Caco-2 (cell line): ENCODE measurements at regions of chr11 and their contacts with region 1.

Region 1: DNA sequence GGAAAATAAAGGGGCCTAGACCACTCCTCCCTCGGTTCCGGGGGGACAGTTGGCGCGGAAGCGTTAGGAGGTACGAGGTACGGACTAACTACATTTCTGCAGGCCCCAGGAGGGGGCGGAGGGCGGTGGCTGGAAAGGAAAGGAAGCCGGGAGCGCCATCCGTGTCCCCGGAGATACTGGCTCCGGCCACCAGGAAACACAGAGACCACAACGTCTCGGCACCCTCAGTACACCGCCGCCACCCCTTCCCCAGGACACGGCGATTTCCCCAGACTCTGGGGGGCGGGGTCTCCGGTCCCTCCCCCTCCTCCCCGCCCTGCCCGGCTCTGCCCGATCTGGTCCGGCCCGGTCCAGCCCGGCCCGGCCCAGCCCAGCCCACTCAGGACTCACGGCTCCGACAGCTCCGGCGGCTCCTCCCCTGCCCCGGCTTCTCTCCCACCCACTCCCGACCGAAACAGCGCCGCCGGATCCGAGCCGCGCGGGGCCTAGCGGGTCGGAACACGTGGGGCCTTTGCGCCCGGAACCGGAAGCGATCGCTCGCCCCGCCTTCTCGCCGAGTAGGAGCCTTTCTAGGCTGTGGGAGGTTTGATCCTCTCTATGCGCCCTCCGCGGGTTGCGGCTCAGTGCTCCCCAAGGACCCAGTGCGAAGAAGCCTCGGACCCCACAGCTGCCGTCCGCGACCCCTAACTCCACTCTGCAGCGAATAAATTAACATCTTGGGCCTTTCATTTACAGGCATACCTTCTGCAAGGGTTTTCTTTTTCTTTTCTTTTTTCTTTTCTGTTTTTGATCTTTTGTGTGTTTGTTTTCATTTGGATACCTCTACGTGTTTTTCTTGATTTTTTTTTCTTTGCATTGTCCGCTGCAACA is at the start of gene ZNF202:
- DNase-seq: peak; percentile 95 to 96
- H3K4me3 ChIP-seq: peak within 1 kb of the TSS; percentile 85
- H3K4me3 Mint-ChIP-seq: peak within 1 kb of the TSS; percentile 85
- H3K27ac Mint-ChIP-seq: peak within 1 kb of the TSS; percentile 79
- H3K4me1 ChIP-seq: peaks cover 18% of the 10 kb centered on the region
- H3K4me1 Mint-ChIP-seq: peaks cover 6% of the 10 kb centered on the region
- H3K27me3 ChIP-seq: no peaks in the 10 kb centered on the region
- H3K27me3 Mint-ChIP-seq: peaks cover 10% of the 10 kb centered on the region
- CTCF ChIP-seq: peak; percentile 41 to 46
- total RNA-seq, gene ZNF202: 25.5 and 27.9 TPM in 2 replicates

Region 2: DNA sequence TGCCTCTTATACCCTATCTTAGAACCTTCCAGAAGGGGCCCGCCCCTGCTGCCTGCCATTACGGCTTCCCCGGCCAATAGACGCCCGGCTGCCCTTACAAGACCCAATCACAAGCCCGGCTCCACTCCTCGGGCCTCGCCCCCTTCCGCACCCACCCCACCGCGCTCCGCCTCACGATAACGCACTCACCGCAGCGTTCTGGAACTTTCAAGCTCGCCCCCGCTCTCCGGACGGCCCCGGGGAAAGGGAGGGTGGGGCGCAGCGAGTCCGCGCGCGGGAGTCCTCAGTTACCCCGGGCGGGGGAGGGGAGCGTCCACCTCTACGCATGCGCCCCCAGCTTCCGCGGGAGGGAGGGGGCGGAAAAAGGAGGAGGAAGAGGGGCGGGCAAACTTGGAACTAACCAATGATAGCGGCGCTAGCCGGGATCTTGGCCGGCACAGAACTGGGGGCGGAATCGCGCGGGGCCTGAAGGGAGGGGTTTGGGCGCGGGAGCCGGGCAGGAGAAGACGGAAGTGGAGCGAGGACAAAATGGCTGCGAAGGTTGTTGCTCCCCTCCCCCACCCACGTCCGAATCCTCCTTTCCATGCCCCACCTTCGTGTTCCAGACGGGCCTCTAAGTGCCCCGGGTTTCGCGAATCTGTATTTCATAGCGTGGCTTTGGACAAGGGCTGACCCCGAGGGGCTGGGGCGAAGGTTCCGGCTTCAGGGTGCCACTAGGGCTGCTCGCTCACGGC is 679.1 kb before region 1 on chr11:
- CTCF ChIA-PET with region 1: no interaction called
- POLR2A ChIA-PET with region 1: no interaction called
- intact Hi-C with region 1: loop called (anchors 5 kb)
- DNase-seq: peak; percentile 100
- H3K4me3 ChIP-seq: peak overlapping the region; percentile 85
- H3K4me3 Mint-ChIP-seq: peak overlapping the region; percentile 84
- H3K27ac Mint-ChIP-seq: peak overlapping the region; percentile 98
- H3K4me1 ChIP-seq: peaks cover 26% of the 10 kb centered on the region
- H3K4me1 Mint-ChIP-seq: peaks cover 31% of the 10 kb centered on the region
- H3K27me3 ChIP-seq: no peaks in the 10 kb centered on the region
- H3K27me3 Mint-ChIP-seq: no peaks in the 10 kb centered on the region
- CTCF ChIP-seq: no peak

Region 3: GRCh38 chr11:123654566-123655081 is 86.8 kb before region 1 on chr11 and contains the start of gene SCN3B:
- CTCF ChIA-PET with region 1: no interaction called
- POLR2A ChIA-PET with region 1: no interaction called
- intact Hi-C with region 1: no loop called
- DNase-seq: peak; percentile 90 to 92
- H3K4me3 ChIP-seq: peak within 1 kb of the TSS; percentile 61
- H3K4me3 Mint-ChIP-seq: peak within 1 kb of the TSS; percentile 66
- H3K27ac Mint-ChIP-seq: no peak within 1 kb of the TSS
- H3K4me1 ChIP-seq: no peaks in the 10 kb centered on the region; the same call in 1 of the 2 replicates
- H3K4me1 Mint-ChIP-seq: no peaks in the 10 kb centered on the region
- H3K27me3 ChIP-seq: 0 out of 2 replicates have a peak, but pooled peaks cover 1% of the 10 kb centered on the region
- H3K27me3 Mint-ChIP-seq: peaks cover 35% of the 10 kb centered on the region
- CTCF ChIP-seq: no peak
- total RNA-seq, gene SCN3B: 0.77 and 0.82 TPM in 2 replicates

Region 4: DNA sequence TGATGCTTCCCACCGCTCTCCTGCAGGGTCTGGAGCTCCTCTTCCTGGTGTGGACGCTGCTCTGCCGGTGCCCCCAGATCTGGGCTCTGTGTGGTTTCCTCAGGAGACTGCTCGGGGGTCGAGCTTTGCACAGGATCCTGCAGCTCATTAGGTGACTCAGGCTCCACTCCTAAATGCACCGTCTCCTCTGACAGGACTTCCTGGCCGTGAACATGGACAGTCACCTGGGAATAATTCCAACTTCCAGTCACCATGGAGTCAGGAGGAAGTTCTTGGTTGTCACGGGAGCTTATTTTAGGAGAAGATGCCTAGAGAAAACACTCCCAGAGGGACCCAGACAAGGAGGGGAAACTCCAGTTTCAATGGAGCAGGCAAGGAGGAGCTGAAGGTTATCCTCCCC is 11.8 kb before region 1 on chr11:
- CTCF ChIA-PET with region 1: no interaction called
- POLR2A ChIA-PET with region 1: no interaction called
- intact Hi-C with region 1: no loop called
- DNase-seq: no peak
- H3K4me3 ChIP-seq: no peak overlapping the region
- H3K4me3 Mint-ChIP-seq: no peak overlapping the region
- H3K27ac Mint-ChIP-seq: no peak overlapping the region
- H3K4me1 ChIP-seq: no peaks in the 10 kb centered on the region
- H3K4me1 Mint-ChIP-seq: no peaks in the 10 kb centered on the region
- H3K27me3 ChIP-seq: no peaks in the 10 kb centered on the region
- H3K27me3 Mint-ChIP-seq: no peaks in the 10 kb centered on the region
- CTCF ChIP-seq: no peak

Region 5: DNA sequence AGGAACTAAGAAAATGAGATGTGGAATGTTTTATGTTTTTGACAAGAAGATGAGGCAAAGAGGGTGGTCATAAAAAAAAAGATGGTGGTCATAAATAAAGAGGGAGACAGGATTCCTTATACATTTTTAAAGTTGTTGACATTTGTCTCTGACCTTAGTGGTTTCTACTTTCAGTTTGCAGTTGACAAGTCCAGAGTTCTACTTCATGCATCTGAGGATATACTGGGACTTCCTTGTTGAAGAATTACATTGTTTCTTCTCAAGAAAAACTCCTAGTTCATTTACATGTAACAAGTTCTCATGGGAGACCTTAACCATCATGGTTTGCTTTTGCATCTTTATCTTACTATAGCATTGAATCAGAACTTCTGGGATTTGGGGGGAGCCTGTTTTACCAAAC is 11.7 kb after region 1 on chr11:
- CTCF ChIA-PET with region 1: no interaction called
- POLR2A ChIA-PET with region 1: no interaction called
- intact Hi-C with region 1: no loop called
- DNase-seq: no peak
- H3K4me3 ChIP-seq: no peak overlapping the region
- H3K4me3 Mint-ChIP-seq: no peak overlapping the region
- H3K27ac Mint-ChIP-seq: no peak overlapping the region
- H3K4me1 ChIP-seq: 0 out of 2 replicates have a peak, but pooled peaks cover 13% of the 10 kb centered on the region
- H3K4me1 Mint-ChIP-seq: no peaks in the 10 kb centered on the region
- H3K27me3 ChIP-seq: 0 out of 2 replicates have a peak, but pooled peaks cover 1% of the 10 kb centered on the region
- H3K27me3 Mint-ChIP-seq: peaks cover 19% of the 10 kb centered on the region
- CTCF ChIP-seq: no peak

Region 6: DNA sequence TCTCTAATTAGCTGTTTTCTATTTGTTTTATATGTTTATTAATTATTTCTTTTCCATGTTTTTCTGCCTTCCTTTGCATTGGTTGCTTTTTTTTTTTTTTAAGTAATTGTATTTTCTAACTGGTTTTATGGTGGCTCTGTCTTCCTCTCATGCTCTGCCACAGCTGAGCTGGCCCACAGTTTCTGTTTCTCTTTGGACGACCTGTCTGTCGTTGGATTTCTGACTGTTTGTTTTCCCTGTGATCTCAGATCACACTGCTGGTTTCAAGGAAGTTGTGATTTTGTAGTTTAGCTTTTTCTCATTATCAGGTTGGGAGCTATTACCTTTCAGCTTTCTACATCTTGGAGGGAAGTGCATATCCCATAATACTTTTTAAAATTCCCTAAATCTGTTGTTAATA is 80.6 kb after region 1 on chr11:
- CTCF ChIA-PET with region 1: no interaction called
- POLR2A ChIA-PET with region 1: no interaction called
- intact Hi-C with region 1: loop called (anchors 1 kb)
- DNase-seq: peak in 1 of 2 experiments; percentile 44
- H3K4me3 ChIP-seq: no peak overlapping the region
- H3K4me3 Mint-ChIP-seq: peak overlapping the region; percentile 54
- H3K27ac Mint-ChIP-seq: peak overlapping the region; percentile 91
- H3K4me1 ChIP-seq: peaks cover 24% of the 10 kb centered on the region
- H3K4me1 Mint-ChIP-seq: peaks cover 19% of the 10 kb centered on the region
- H3K27me3 ChIP-seq: no peaks in the 10 kb centered on the region
- H3K27me3 Mint-ChIP-seq: no peaks in the 10 kb centered on the region
- CTCF ChIP-seq: no peak

Region 7: GRCh38 chr11:124194698-124195410 is 453.5 kb after region 1 on chr11:
- CTCF ChIA-PET with region 1: no interaction called
- POLR2A ChIA-PET with region 1: no interaction called
- intact Hi-C with region 1: loop called (anchors 10 kb)
- DNase-seq: peak; percentile 62 to 68
- H3K4me3 ChIP-seq: no peak overlapping the region
- H3K4me3 Mint-ChIP-seq: no peak overlapping the region
- H3K27ac Mint-ChIP-seq: no peak overlapping the region
- H3K4me1 ChIP-seq: no peaks in the 10 kb centered on the region
- H3K4me1 Mint-ChIP-seq: no peaks in the 10 kb centered on the region
- H3K27me3 ChIP-seq: no peaks in the 10 kb centered on the region
- H3K27me3 Mint-ChIP-seq: peaks cover 13% of the 10 kb centered on the region
- CTCF ChIP-seq: peak; percentile 82 to 88